ENCODE measurements at regions of chr3 and their contacts with region 1.

Region 1: DNA sequence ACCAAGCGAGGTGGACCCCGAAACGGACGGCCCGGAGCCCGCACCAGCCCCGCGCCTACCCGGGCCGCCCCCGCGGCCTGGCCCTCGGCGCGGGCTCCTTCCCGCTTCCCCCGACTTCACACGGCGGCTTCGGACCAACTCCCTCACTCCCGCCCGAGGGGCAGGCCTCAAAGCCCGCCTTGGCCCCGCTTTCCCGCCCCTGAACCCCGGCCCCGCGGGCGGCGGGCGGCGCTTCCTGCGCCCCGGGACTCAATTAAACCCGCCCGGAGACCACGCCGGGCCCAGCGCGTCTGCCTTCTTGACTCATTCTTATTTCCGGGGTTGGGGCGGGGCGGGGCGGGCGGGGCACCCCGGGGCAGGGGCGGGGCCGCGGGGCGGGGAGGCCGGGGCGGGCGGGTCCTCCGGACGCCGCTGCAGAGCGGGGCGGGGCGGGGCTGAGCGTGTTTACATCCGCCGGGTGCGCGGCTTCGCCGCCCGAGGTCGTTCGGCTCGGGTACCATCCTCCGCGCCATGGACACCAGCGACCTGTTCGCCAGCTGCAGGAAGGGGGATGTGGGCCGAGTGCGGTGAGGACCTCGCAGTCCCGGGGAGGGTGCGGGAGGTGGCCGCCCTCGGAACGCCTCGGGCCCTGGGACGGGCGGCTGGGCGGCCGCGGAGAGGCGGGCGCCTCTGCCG is at the start of gene ABTB1:
- DNase-seq: peak; percentile 96
- H3K4me3 Mint-ChIP-seq: peak within 1 kb of the TSS; percentile 92
- H3K27ac Mint-ChIP-seq: peak within 1 kb of the TSS; percentile 96
- H3K4me1 Mint-ChIP-seq: peaks cover 18% of the 10 kb centered on the region
- H3K27me3 Mint-ChIP-seq: no peaks in the 10 kb centered on the region
- total RNA-seq, gene ABTB1: 6.9 and 8.0 TPM in 2 replicates

Region 2: GRCh38 chr3:127590593-127591477 is 81.8 kb before region 1 on chr3 and contains the start of gene TPRA1:
- intact Hi-C with region 1: loop called (anchors 2 kb)
- DNase-seq: peak; percentile 95
- H3K4me3 Mint-ChIP-seq: peak within 1 kb of the TSS; percentile 93
- H3K27ac Mint-ChIP-seq: peak within 1 kb of the TSS; percentile 95
- H3K4me1 Mint-ChIP-seq: peaks cover 22% of the 10 kb centered on the region
- H3K27me3 Mint-ChIP-seq: no peaks in the 10 kb centered on the region
- total RNA-seq, gene TPRA1: 32.9 and 37.2 TPM in 2 replicates

Region 3: DNA sequence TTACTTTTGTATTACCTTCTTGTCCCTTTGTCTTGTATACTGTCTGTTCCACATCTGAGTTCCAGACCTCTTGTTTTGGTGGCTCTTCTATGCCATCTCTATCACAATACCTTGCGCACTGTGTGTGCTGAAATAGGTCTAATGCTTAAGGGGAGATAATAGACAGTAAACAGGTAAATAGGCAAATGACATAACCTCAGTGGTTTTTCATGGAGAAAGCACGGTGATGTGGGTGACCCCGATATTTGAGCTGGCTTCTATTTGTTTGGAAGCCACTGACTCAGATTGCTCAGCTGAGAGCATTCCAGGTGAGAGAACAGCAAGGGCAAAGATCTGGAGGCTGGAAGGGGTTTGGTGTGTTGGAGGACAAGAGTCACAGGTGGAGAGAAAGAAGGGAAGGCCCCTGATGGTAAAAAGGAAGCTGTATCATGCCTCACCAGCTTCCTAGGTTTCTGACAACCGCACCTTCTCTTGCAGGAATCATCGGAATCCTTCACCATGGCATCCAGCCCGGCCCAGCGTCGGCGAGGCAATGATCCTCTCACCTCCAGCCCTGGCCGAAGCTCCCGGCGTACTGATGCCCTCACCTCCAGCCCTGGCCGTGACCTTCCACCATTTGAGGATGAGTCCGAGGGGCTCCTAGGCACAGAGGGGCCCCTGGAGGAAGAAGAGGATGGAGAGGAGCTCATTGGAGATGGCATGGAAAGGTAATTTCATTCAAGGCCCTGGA is 73.6 kb before region 1 on chr3:
- intact Hi-C with region 1: loop called (anchors 2 kb)
- DNase-seq: no peak
- H3K4me3 Mint-ChIP-seq: peak overlapping the region; percentile 90
- H3K27ac Mint-ChIP-seq: peak overlapping the region; percentile 95
- H3K4me1 Mint-ChIP-seq: peaks cover 41% of the 10 kb centered on the region
- H3K27me3 Mint-ChIP-seq: no peaks in the 10 kb centered on the region

Region 4: DNA sequence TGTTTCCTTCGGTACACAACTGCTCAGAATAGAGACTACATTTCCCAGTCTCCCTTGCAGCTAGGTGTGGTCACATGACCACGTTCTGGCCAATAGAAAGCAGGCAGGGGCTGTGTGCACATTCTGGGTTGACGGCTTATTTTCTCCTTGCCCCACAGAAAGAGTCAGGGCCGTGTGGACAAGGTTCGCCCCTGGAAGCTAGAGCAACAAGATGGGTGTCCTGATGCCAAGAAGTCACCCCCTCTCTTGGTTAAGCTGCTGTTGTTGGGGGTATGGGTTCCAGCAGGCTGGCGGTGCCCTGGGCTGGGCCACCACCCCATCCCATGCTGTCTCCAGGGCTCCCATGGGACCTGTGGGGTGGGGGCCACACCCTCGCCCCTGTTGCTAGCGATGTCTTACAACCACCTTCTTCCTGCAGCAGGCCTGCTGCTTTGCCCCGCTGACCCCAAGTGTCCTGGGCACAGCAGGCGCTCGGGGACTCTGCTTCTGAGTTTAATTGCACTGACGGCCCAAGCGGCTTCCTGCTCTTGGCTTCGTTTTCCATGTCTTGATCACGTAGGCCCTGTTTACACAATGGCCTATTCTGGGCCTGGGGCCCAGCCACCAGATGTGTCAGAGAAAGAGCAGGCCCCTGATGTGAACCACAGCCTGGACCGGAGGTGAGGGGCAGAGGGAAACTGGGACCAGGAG is 25.0 kb after region 1 on chr3:
- intact Hi-C with region 1: loop called (anchors 2 kb)
- DNase-seq: peak; percentile 86
- H3K4me3 Mint-ChIP-seq: no peak overlapping the region
- H3K27ac Mint-ChIP-seq: no peak overlapping the region
- H3K4me1 Mint-ChIP-seq: peaks cover 3% of the 10 kb centered on the region
- H3K27me3 Mint-ChIP-seq: no peaks in the 10 kb centered on the region

Region 5: GRCh38 chr3:128153156-128154041 is 480.7 kb after region 1 on chr3 and contains the start of gene EEFSEC:
- intact Hi-C with region 1: loop called (anchors 2 kb)
- DNase-seq: peak; percentile 96
- H3K4me3 Mint-ChIP-seq: peak within 1 kb of the TSS; percentile 89
- H3K27ac Mint-ChIP-seq: peak within 1 kb of the TSS; percentile 95
- H3K4me1 Mint-ChIP-seq: peaks cover 17% of the 10 kb centered on the region
- H3K27me3 Mint-ChIP-seq: no peaks in the 10 kb centered on the region
- total RNA-seq, gene EEFSEC: 19.2 and 21.3 TPM in 2 replicates

Measured in activated CD4-positive, alpha-beta T cell treated with anti-CD3 and anti-CD28 coated beads, Interleukin-2, amount 10 ng/mL, durations not matched to agents 24 days and 14 days (primary cell).